ENCODE measurements at regions of chr10 and their contacts with region 1.

Region 1: GRCh38 chr10:73644015-73644743 is 2.9 kb upstream of the MYOZ1 start:
- DNase-seq: peak; percentile 47
- ATAC-seq: peak; percentile 25

Region 2: GRCh38 chr10:73529089-73529832 is 114.9 kb before region 1 on chr10:
- intact Hi-C with region 1: loop called (anchors 2 kb)
- DNase-seq: no peak
- ATAC-seq: peak; percentile 90

Region 3: GRCh38 chr10:73743905-73744663 is 99.9 kb after region 1 on chr10 and contains the start of gene SEC24C:
- intact Hi-C with region 1: no loop called
- DNase-seq: peak; percentile 97
- ATAC-seq: peak; percentile 96
- total RNA-seq, gene SEC24C: 50.5 TPM